T-cell (primary cell): ENCODE measurements at regions of chr7 and their contacts with region 1.

Region 1: DNA sequence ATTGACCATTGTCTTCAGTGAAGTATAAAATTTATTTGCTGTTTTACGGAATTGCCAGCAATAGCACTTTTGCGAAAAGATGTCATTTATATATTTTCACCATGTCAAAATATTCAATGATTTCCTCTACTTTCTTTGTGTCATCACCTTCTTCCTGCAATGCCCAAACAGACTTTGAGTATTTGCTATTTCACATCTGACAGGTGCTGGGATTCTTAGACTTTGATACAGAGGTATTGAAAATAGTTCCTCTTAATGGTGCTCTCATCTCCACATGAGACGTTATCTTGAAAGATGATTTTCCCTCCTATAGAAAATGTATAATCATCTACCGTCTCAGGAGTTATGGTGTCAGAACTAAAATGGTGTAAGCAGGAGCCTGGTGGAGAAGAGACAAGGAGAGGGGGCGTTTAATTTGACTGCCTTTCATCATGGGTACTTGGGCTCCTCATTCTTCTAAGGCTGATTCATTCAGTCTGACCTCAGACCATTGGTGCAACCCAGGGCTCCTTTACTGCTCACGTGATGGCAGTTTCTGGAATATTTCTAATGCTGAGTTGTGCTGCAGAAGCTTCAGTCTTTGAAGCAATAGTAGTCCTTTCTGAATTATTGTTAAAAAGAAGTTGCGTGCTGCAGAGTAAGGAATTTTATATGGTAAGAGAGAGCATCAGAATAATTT is 404.6 kb downstream of the PHTF2 start:
- DNase-seq: no peak
- ATAC-seq: no peak
- H3K4me3 ChIP-seq: no peak overlapping the region
- H3K4me3 Mint-ChIP-seq: no peak overlapping the region
- H3K27ac ChIP-seq: no peak overlapping the region
- H3K27ac Mint-ChIP-seq: no peak overlapping the region
- H3K4me1 ChIP-seq: no peaks in the 10 kb centered on the region
- H3K4me1 Mint-ChIP-seq: no peaks in the 10 kb centered on the region
- H3K27me3 ChIP-seq: no peaks in the 10 kb centered on the region
- H3K27me3 Mint-ChIP-seq: peaks cover 1 to 2% of the 10 kb centered on the region in 2 donors

Region 2: GRCh38 chr7:78688376-78688775 is 485.2 kb after region 1 on chr7:
- CTCF ChIA-PET with region 1: interaction called in 1 of 2 experiments, 12 read pairs
- POLR2A ChIA-PET with region 1: no interaction called
- DNase-seq: no peak
- ATAC-seq: no peak
- H3K4me3 ChIP-seq: no peak overlapping the region
- H3K4me3 Mint-ChIP-seq: no peak overlapping the region
- H3K27ac ChIP-seq: no peak overlapping the region
- H3K27ac Mint-ChIP-seq: no peak overlapping the region
- H3K4me1 ChIP-seq: no peaks in the 10 kb centered on the region
- H3K4me1 Mint-ChIP-seq: no peaks in the 10 kb centered on the region
- H3K27me3 ChIP-seq: no peaks in the 10 kb centered on the region
- H3K27me3 Mint-ChIP-seq: no peaks in the 10 kb centered on the region